Activated naive CD4-positive, alpha-beta T cell treated with anti-CD3 and anti-CD28 coated beads, Interleukin-2, amount 10 ng/mL, durations not matched to agents 7 days and 5 days (primary cell): ENCODE measurements at regions of chr22 and their contacts with region 1.

Region 1: DNA sequence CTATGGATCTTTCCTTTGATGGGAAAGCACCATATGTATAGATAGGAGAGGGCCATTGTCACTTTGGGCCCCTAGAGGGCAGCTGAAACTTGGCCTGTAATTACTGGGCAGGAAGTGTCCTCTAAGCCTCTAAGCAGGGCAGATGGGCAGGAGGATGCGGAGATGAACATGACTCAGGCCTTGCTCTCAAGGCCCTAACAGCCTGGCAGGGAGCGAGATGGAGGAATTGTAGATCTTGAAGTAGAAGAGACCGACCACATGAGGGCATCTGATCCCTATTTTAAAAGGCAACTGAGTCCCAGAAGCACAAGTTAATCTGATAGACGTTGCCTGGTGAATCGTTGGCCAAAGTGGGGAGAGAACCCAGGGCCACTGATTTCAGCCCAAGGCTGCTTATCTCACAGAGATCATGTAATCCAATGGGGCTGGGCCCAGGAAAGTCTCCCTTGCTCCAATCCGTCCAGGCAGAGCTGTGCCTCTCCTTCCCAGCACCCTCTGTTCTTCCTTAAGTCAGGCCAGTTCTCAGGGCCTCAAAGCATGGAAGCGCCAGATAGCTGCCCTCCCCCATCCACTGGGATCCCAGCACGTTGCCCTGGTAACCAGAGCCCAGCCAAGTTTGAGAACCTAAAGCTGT is 2.5 kb upstream of the SEPTIN3 start:
- DNase-seq: peak; percentile 62
- H3K4me3 Mint-ChIP-seq: no peak overlapping the region
- H3K27ac Mint-ChIP-seq: no peak overlapping the region
- H3K4me1 Mint-ChIP-seq: peaks cover 2% of the 10 kb centered on the region
- H3K27me3 Mint-ChIP-seq: peaks cover 52% of the 10 kb centered on the region

Region 2: DNA sequence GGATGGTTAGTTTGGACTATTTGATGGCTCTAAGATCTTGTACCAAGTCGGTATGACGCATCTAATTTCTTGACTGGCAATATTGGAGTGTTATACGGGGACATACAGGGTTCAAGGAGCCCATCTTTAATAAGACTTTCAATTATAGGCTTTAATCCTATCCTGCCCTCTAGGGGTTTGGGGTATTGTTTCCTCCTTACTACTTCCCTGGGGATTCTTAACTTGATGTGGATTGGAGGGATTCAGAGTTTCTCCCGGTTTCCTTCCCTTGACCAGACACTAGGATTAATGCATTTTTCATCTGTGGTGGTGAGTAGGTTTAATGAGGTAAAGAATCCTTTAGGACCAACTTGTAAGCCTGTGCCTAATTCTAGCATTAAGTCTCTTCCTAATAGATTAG is 145.1 kb after region 1 on chr22:
- CTCF ChIA-PET with region 1: interaction called, 15 read pairs
- DNase-seq: no peak
- H3K4me3 Mint-ChIP-seq: no peak overlapping the region
- H3K27ac Mint-ChIP-seq: no peak overlapping the region
- H3K4me1 Mint-ChIP-seq: peaks cover 2% of the 10 kb centered on the region
- H3K27me3 Mint-ChIP-seq: peaks cover 6% of the 10 kb centered on the region